ENCODE measurements at regions of chrX and their contacts with region 1.

Region 1: GRCh38 chrX:30713061-30713525 is 59.9 kb downstream of the GK start:
- DNase-seq: peak; percentile 32 to 72 (median 54)
- H3K4me3 ChIP-seq: no peak overlapping the region
- H3K27ac ChIP-seq: no peak overlapping the region
- H3K4me1 ChIP-seq: no peaks in the 10 kb centered on the region
- H3K27me3 ChIP-seq: no peaks in the 10 kb centered on the region
- CTCF ChIP-seq: peak; percentile 20 to 63 (median 52)
- POLR2A ChIP-seq: no peak

Region 2: GRCh38 chrX:30593435-30594200 is 119.5 kb before region 1 on chrX:
- intact Hi-C with region 1: no loop called
- DNase-seq: no peak
- H3K4me3 ChIP-seq: no peak overlapping the region
- H3K27ac ChIP-seq: no peak overlapping the region
- H3K4me1 ChIP-seq: no peaks in the 10 kb centered on the region
- H3K27me3 ChIP-seq: no peaks in the 10 kb centered on the region
- CTCF ChIP-seq: no peak
- POLR2A ChIP-seq: no peak

Region 3: GRCh38 chrX:30635630-30636029 is 77.5 kb before region 1 on chrX:
- intact Hi-C with region 1: loop called (anchors 10 kb)
- DNase-seq: peak in 1 of 7 donors; percentile 25
- H3K4me3 ChIP-seq: no peak overlapping the region
- H3K27ac ChIP-seq: no peak overlapping the region
- H3K4me1 ChIP-seq: no peaks in the 10 kb centered on the region
- H3K27me3 ChIP-seq: no peaks in the 10 kb centered on the region
- CTCF ChIP-seq: peak in 5 of 6 experiments; percentile 27 to 52 (median 42)
- POLR2A ChIP-seq: no peak

Region 4: GRCh38 chrX:31126205-31126604 is 413.1 kb after region 1 on chrX:
- intact Hi-C with region 1: no loop called
- DNase-seq: peak; percentile 25 to 64 (median 55)
- H3K4me3 ChIP-seq: no peak overlapping the region
- H3K27ac ChIP-seq: peak overlapping the region in 2 of 5 donors; percentile 37 to 46
- H3K4me1 ChIP-seq: no peaks in the 10 kb centered on the region
- H3K27me3 ChIP-seq: no peaks in the 10 kb centered on the region
- CTCF ChIP-seq: no peak
- POLR2A ChIP-seq: no peak